Activated CD4-positive, alpha-beta T cell treated with anti-CD3 and anti-CD28 coated beads, Interleukin-2, amount 10 ng/mL, durations not matched to agents 7 days and 5 days (primary cell): ENCODE measurements at regions of chr19 and their contacts with region 1.

Region 1: GRCh38 chr19:43784981-43785808 is 4.4 kb upstream of the KCNN4 start:
- DNase-seq: peak; percentile 71
- H3K4me3 Mint-ChIP-seq: peak overlapping the region; percentile 6
- H3K27ac Mint-ChIP-seq: peak overlapping the region; percentile 91
- H3K4me1 Mint-ChIP-seq: peaks cover 44% of the 10 kb centered on the region
- H3K27me3 Mint-ChIP-seq: no peaks in the 10 kb centered on the region

Region 2: GRCh38 chr19:43726736-43727592 is 58.2 kb before region 1 on chr19:
- CTCF ChIA-PET with region 1: no interaction called
- POLR2A ChIA-PET with region 1: interaction called, 15 read pairs
- DNase-seq: no peak
- H3K4me3 Mint-ChIP-seq: no peak overlapping the region
- H3K27ac Mint-ChIP-seq: no peak overlapping the region
- H3K4me1 Mint-ChIP-seq: peaks cover 6% of the 10 kb centered on the region
- H3K27me3 Mint-ChIP-seq: no peaks in the 10 kb centered on the region

Region 3: DNA sequence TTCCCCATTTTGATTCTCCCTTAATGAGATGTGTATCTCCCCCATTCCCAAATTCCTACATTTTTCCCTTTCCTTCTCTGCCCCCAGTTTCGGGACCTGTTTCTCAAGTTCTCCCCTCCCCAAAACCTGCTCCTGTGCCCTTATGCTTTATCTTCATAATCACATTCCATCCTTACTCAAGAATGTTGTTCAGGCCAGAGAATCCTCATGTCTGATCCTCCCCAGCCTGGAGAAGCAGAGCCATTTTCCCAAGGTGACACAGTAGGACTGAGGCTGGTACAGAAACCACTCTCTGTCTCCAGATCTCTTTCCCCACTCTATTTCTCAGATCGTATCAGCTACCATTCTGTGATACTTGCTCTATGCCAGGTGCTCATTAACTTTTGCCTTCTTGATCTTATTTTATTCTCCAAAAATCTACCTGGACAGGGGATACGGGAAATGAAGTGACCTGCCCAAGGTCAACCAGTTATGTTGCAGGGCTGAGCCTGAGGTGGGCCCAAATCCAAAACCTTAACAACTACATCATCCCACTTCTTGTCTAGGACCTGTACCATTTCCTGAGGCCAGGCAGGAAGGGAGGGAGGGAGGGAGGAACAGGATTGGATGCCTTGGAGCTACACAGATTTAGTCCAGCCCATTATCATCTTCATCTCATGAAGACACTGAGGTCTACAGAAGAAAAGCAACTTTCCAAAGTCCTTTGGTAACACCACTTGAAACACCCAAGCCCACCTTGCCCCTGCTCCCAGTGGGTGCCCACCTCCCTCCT is 41.0 kb before region 1 on chr19:
- CTCF ChIA-PET with region 1: interaction called, 12 read pairs
- POLR2A ChIA-PET with region 1: no interaction called
- DNase-seq: no peak
- H3K4me3 Mint-ChIP-seq: no peak overlapping the region
- H3K27ac Mint-ChIP-seq: no peak overlapping the region
- H3K4me1 Mint-ChIP-seq: peaks cover 21% of the 10 kb centered on the region
- H3K27me3 Mint-ChIP-seq: no peaks in the 10 kb centered on the region

Region 4: DNA sequence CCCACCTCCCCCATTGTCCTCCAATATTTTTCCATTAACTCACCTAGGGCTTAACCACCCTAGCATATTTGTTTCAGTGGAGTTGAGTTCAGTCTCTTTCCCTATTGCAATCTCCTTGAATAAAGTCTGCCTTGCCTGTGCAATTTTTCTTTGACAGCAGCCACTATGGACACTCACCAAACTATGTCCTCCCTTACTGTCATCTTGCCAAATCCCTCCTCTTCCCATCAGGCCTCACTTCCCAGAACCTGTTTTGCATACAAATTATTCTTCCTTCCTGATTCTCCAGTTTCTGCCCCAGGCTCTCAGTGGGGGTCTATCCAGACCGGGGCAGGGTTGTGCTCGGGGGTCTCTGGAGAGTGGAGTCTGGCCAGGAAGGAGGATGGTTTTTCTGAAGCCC is 19.2 kb after region 1 on chr19:
- CTCF ChIA-PET with region 1: no interaction called
- POLR2A ChIA-PET with region 1: no interaction called
- DNase-seq: no peak
- H3K4me3 Mint-ChIP-seq: no peak overlapping the region
- H3K27ac Mint-ChIP-seq: no peak overlapping the region
- H3K4me1 Mint-ChIP-seq: peaks cover 2% of the 10 kb centered on the region
- H3K27me3 Mint-ChIP-seq: peaks cover 6% of the 10 kb centered on the region